GM12878 (cell line): ENCODE measurements at regions of chr20 and their contacts with region 1.

Region 1: DNA sequence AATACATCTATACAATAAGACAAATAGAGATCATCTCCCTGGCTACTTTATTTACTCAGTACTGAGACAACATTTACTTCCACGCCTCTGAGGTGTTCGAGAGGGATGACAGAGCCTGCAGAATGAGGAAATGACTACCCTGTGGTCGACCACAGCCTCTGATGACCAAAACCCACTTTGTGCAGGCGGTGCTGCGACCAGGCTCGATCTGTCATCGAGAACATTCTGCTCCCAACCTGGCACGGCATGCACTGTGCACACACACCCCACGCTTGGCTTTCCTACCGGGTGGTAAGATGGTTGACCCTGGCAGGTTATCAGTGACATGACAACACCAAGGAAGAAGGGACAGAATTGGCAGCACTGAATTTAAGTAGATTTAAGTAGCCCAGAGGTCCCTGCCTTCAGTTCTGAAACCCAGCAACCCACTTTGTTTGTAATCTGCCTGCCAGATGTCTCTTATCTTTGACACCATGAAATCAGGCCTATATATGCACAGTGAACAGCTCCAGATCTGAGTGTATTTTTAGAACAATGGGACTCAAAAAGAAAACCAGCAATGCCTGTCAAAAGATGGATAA is 42.6 kb downstream of the TTI1 start:
- DNase-seq: peak; percentile 84
- ATAC-seq: peak; percentile 98
- H3K4me3 ChIP-seq: peak overlapping the region; percentile 13; the same call in 1 of the 2 replicates
- H3K27ac ChIP-seq: peak overlapping the region; percentile 63
- H3K4me1 ChIP-seq: peaks cover 33% of the 10 kb centered on the region
- H3K27me3 ChIP-seq: no peaks in the 10 kb centered on the region
- CTCF ChIP-seq: no peak
- EP300 ChIP-seq: peak; percentile 95 to 97
- POLR2A ChIP-seq: no peak
- RAD21 ChIP-seq: no peak

Region 2: DNA sequence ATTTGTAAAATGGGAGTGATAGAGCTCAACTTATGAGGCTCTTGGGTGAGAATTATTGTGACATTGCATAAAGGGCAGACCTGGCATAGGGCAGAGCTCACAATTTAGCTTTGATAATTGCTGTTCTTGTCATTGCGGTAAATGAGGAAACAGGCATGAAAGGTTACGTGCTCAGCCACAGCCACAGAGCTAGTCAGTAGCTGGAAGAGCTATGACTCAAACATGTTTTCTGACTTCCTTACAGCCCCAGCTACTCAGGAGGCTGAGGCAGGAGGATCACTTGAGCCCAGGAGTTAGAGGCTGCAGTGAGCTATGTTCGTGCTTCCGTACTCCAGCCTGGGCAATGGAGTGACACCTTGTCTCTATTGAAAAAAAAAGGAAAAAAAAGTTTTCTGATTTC is 725.5 kb before region 1 on chr20:
- CTCF ChIA-PET with region 1: no interaction called
- POLR2A ChIA-PET with region 1: no interaction called
- RAD21 ChIA-PET with region 1: no interaction called
- SMC1A ChIA-PET with region 1: no interaction called
- in situ Hi-C with region 1: loop called (anchors 10 kb)
- intact Hi-C with region 1: no loop called
- DNase-seq: no peak
- ATAC-seq: peak; percentile 87
- H3K4me3 ChIP-seq: no peak overlapping the region
- H3K27ac ChIP-seq: no peak overlapping the region
- H3K4me1 ChIP-seq: peaks cover 14% of the 10 kb centered on the region
- H3K27me3 ChIP-seq: no peaks in the 10 kb centered on the region; a peak in 1 of 4 replicates
- CTCF ChIP-seq: no peak
- EP300 ChIP-seq: 0 out of 4 replicates have a peak, but pooled peaks of 1 of the 2 experiments have one; percentile 51
- POLR2A ChIP-seq: no peak
- RAD21 ChIP-seq: no peak

Region 3: DNA sequence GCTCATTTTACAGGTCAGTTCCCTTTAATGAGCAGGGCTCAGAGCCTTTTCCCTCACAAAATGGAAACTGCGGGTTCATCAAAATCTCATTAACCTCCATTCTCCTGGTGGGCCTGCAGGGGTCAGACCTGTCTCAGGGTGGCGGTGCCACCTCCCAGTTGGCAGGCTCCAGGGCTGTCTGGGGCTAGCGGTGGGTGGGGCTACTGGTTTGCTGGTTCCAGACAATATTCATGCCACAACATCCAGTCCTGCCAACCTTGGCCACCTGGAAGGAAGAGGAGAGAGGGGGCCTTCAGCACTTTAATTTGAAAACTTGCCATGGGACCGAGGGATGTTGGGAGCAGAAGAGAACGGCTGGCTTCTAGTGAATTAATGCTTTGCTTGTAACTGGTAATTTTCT is 338.7 kb before region 1 on chr20:
- CTCF ChIA-PET with region 1: no interaction called
- POLR2A ChIA-PET with region 1: no interaction called
- RAD21 ChIA-PET with region 1: no interaction called
- SMC1A ChIA-PET with region 1: no interaction called
- in situ Hi-C with region 1: no loop called
- intact Hi-C with region 1: loop called (anchors 5 kb)
- DNase-seq: no peak
- ATAC-seq: peak; percentile 86
- H3K4me3 ChIP-seq: no peak overlapping the region
- H3K27ac ChIP-seq: no peak overlapping the region
- H3K4me1 ChIP-seq: no peaks in the 10 kb centered on the region
- H3K27me3 ChIP-seq: peaks cover 0 to 7% of the 10 kb centered on the region in 2 experiments; a peak in 2 of 4 replicates
- CTCF ChIP-seq: peak; percentile 54 to 60 (median 56); a peak in 4 of 6 replicates
- EP300 ChIP-seq: no peak
- POLR2A ChIP-seq: no peak
- RAD21 ChIP-seq: peak; percentile 76

Region 4: GRCh38 chr20:37804584-37805566 is 185.8 kb before region 1 on chr20:
- CTCF ChIA-PET with region 1: interaction called, 3 read pairs
- POLR2A ChIA-PET with region 1: no interaction called
- RAD21 ChIA-PET with region 1: no interaction called
- SMC1A ChIA-PET with region 1: no interaction called
- in situ Hi-C with region 1: no loop called
- intact Hi-C with region 1: loop called (anchors 5 kb)
- DNase-seq: peak; percentile 86
- ATAC-seq: peak; percentile 90
- H3K4me3 ChIP-seq: peak overlapping the region; percentile 28; the same call in 1 of the 2 replicates
- H3K27ac ChIP-seq: peak overlapping the region; percentile 63
- H3K4me1 ChIP-seq: peaks cover 37% of the 10 kb centered on the region
- H3K27me3 ChIP-seq: no peaks in the 10 kb centered on the region
- CTCF ChIP-seq: no peak
- EP300 ChIP-seq: peak; percentile 57 to 69; a peak in 2 of 4 replicates
- POLR2A ChIP-seq: peak; percentile 59; the same call in 1 of the 2 replicates
- RAD21 ChIP-seq: no peak

Region 5: GRCh38 chr20:37907677-37908401 is 82.8 kb before region 1 on chr20:
- CTCF ChIA-PET with region 1: interaction called, 13 read pairs
- POLR2A ChIA-PET with region 1: no interaction called
- RAD21 ChIA-PET with region 1: interaction called, 10 read pairs
- SMC1A ChIA-PET with region 1: interaction called, 15 read pairs
- in situ Hi-C with region 1: loop called (anchors 5 kb)
- intact Hi-C with region 1: no loop called
- DNase-seq: no peak
- ATAC-seq: no peak
- H3K4me3 ChIP-seq: no peak overlapping the region
- H3K27ac ChIP-seq: no peak overlapping the region
- H3K4me1 ChIP-seq: no peaks in the 10 kb centered on the region; the same call in 1 of the 2 replicates
- H3K27me3 ChIP-seq: peaks cover 0 to 4% of the 10 kb centered on the region in 2 experiments; a peak in 2 of 4 replicates
- CTCF ChIP-seq: no peak
- EP300 ChIP-seq: no peak
- POLR2A ChIP-seq: no peak
- RAD21 ChIP-seq: no peak